ENCODE measurements at regions of chr3 and their contacts with region 1.

Region 1: GRCh38 chr3:25427942-25428788 is at the start of gene RARB:
- DNase-seq: peak; percentile 40 to 64
- ATAC-seq: peak; percentile 88 to 94
- H3K4me3 ChIP-seq: peak within 1 kb of the TSS; percentile 64 to 83 (median 72)
- H3K27ac ChIP-seq: peak within 1 kb of the TSS; percentile 80 to 88 (median 82)
- H3K4me1 ChIP-seq: peaks cover 19 to 20% of the 10 kb centered on the region in 2 donors
- H3K27me3 ChIP-seq: no peaks in the 10 kb centered on the region
- CTCF ChIP-seq: no peak
- POLR2A ChIP-seq: peak; percentile 70 to 83
- total RNA-seq, gene RARB: 1.2 to 3.0 (median 1.9) TPM

Region 2: DNA sequence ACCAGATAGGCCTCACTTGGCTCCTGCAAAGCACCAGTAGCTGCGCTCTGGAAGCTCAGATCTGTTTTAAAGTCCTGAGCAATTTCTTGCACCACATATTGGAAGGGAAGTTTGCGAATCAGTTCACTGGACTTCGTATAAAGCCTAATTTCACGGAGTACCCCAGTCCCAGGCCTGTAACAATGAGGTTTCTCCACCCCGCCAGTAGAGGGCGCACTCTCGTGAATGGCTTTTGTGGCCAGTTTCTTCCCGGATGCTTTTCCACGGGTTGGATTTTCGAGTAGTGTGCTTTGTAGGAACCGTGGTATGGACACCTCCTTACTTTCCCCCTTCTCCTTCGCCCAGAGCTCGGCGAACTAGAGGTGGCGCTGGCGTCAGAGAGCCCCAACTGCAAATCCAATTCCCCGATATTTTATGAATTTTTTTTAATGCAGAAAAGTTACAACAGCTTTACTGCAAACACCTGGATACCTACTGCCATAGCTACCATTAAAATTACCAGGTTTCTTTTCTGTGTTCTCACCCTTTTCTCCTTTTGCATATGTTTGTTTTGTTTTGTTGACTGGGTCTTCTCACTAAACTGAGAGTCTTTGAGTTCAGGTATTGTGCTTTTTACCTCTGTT is 13.2 kb after region 1 on chr3:
- in situ Hi-C with region 1: no loop called
- intact Hi-C with region 1: no loop called
- DNase-seq: no peak
- ATAC-seq: no peak
- H3K4me3 ChIP-seq: no peak overlapping the region
- H3K27ac ChIP-seq: no peak overlapping the region
- H3K4me1 ChIP-seq: peaks cover 0 to 9% of the 10 kb centered on the region in 2 donors
- H3K27me3 ChIP-seq: no peaks in the 10 kb centered on the region
- CTCF ChIP-seq: peak; percentile 39 to 61 (median 50)
- POLR2A ChIP-seq: no peak

Region 3: DNA sequence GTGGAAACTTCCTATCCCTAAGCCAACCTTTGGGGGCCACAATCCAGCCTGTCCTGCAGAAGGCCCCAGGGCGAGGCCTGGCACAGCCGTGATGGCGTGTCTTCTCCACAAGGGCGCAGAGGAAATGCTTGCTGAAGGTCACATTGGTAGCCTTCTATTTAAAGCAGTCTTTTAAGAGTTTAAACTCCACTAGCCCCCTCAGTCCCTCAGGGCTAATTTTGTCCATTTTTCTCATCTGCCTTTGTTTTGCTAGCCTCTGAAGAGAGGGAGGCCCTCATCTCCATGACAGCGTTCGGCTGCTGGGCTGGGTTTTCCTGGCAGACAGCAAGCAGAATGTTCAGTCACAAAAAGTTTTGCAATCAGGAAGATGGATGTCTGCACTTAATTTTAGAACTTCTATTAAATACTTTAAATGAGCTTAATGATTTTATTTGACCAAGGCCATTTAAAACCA is 40.7 kb after region 1 on chr3:
- in situ Hi-C with region 1: no loop called
- intact Hi-C with region 1: loop called (anchors 5 kb)
- DNase-seq: peak; percentile 43 to 49
- ATAC-seq: peak; percentile 61 to 70
- H3K4me3 ChIP-seq: no peak overlapping the region
- H3K27ac ChIP-seq: peak overlapping the region in 3 of 4 donors; percentile 70 to 82 (median 77)
- H3K4me1 ChIP-seq: peaks cover 53 to 83% of the 10 kb centered on the region in 2 donors
- H3K27me3 ChIP-seq: no peaks in the 10 kb centered on the region
- CTCF ChIP-seq: peak; percentile 4 to 47 (median 31)
- POLR2A ChIP-seq: no peak

Region 4: DNA sequence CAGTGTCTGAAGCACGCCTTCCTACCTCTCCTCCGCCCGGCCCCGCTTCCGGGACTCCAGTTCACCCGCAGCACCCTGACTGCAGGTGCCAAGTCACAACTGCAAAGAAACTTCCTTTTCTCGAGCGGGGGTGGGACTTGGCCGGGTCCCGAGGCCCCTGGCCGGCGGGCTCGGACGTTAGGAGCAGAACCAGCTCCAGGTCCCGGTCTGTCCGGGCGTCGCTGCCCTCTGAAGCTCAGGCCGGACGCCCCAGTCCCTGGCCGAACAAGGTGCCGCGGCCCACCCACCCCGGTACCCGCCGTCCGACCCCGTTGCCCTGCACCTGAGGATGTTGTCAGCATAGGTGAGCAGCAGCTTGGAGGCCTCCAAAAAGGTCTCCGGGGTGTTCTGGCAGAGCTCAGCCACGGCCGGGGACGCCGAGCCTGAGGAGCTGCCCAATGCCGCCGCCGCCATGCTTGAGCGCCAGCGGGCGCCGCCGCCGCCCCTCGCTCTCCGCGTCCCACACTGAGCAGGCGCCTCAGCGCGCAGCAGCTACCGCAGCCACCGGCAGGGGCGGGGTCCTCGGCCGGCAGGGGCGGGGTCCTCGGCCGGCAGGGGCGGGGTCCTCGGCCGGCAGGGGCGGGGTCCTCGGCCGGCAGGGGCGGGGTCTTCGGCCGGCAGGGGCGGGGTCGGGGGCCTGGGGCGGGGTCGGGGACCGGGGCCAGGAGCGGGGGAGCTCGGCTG is 354.9 kb after region 1 on chr3 and contains the start of gene NGLY1:
- in situ Hi-C with region 1: loop called in 1 of 4 experiments (anchors 25 kb)
- intact Hi-C with region 1: loop called (anchors 5 kb)
- DNase-seq: peak; percentile 78 to 79
- ATAC-seq: peak; percentile 90 to 92
- H3K4me3 ChIP-seq: peak within 1 kb of the TSS; percentile 87 to 97 (median 94)
- H3K27ac ChIP-seq: peak within 1 kb of the TSS; percentile 91 to 97 (median 94)
- H3K4me1 ChIP-seq: peaks cover 15 to 22% of the 10 kb centered on the region in 2 donors
- H3K27me3 ChIP-seq: no peaks in the 10 kb centered on the region
- CTCF ChIP-seq: peak in 3 of 5 experiments; percentile 27 to 56 (median 29)
- POLR2A ChIP-seq: peak; percentile 90 to 94
- total RNA-seq, gene NGLY1: 61.5 to 73.3 (median 68.6) TPM

Measured in gastrocnemius medialis (tissue), 4 donors.